ENCODE measurements at regions of chr17 and their contacts with region 1.

Region 1: DNA sequence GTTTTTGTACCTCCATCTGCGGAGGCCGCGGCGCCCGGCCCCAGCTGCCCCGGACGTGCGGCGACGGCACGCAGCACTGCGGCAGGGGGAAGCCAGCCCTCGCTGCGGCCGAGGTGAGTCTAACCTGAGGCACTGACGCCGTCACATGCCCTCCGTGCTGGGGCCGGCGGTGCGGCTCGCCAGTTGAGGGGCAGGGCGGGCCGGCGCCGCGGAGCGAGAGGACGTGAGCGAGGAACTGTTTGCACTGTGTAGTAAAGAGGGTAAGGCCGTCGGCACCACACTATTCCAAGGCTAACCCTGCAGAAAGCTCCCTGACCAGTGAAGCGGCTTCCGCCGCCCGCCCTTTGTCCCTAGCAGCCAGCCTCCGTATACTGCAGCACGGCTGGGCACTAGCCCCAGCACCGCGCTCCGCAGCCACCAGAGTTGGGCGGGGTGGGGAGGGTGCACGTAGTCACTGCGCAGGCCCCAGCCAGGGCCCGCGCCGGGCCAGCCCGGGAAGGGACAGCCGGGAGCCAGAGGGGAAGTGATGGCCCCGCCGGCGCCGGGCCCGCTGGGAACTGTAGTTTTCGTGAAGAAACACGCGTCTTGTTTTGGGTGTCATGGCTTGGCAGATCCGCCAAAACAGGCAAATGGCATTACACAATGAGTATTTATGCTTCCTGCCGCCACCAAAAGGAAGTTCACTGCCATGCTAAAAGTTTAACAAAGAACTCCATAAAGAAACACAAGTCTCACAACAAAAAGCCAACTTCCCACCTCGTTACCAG is 580 bp upstream of the KANSL1 start:
- DNase-seq: peak; percentile 76 to 99 (median 93)
- ATAC-seq: peak; percentile 72 to 76 (median 76)
- H3K4me3 ChIP-seq: peak overlapping the region; percentile 94 to 96
- H3K4me3 Mint-ChIP-seq: peak overlapping the region; percentile 83 to 96 (median 85)
- H3K27ac ChIP-seq: peak overlapping the region; percentile 100
- H3K27ac Mint-ChIP-seq: peak overlapping the region; percentile 93 to 98
- H3K4me1 ChIP-seq: peaks cover 39 to 58% of the 10 kb centered on the region in 2 experiments
- H3K4me1 Mint-ChIP-seq: peaks cover 58 to 74% (median 66%) of the 10 kb centered on the region in 3 donors
- H3K27me3 ChIP-seq: no peaks in the 10 kb centered on the region
- H3K27me3 Mint-ChIP-seq: no peaks in the 10 kb centered on the region

Region 2: DNA sequence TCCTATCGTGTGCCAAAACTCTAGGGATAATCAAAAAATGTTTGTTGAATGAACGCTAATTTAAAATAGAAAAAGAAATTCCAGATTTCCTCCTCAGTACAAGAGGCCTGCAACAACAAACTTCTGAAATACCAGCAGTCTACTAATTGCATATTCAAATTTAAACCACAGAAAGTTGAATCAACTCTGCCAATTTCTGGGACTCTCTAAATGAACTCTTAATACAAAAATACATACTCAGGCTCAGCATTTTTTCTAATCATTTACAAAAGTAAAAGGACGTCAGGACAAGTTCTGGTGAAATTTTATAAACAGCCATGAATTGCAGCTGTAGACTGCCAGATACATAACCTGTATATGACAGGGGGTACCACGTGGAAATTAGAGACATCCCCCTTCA is 49.6 kb before region 1 on chr17:
- CTCF ChIA-PET with region 1: interaction called, 8 to 13 read pairs
- POLR2A ChIA-PET with region 1: interaction called, 5 to 7 read pairs
- DNase-seq: no peak
- ATAC-seq: no peak
- H3K4me3 ChIP-seq: no peak overlapping the region
- H3K4me3 Mint-ChIP-seq: peak overlapping the region in 1 of 3 donors; percentile 53
- H3K27ac ChIP-seq: no peak overlapping the region
- H3K27ac Mint-ChIP-seq: no peak overlapping the region
- H3K4me1 ChIP-seq: peaks cover 40 to 60% of the 10 kb centered on the region in 2 experiments
- H3K4me1 Mint-ChIP-seq: peaks cover 92 to 98% (median 94%) of the 10 kb centered on the region in 3 donors
- H3K27me3 ChIP-seq: no peaks in the 10 kb centered on the region
- H3K27me3 Mint-ChIP-seq: no peaks in the 10 kb centered on the region

Region 3: GRCh38 chr17:46163316-46163715 is 30.5 kb before region 1 on chr17:
- CTCF ChIA-PET with region 1: interaction called, 5 to 11 read pairs
- POLR2A ChIA-PET with region 1: interaction called in 1 of 2 experiments, 6 read pairs
- DNase-seq: no peak
- ATAC-seq: no peak
- H3K4me3 ChIP-seq: no peak overlapping the region
- H3K4me3 Mint-ChIP-seq: peak overlapping the region in 2 of 3 donors; percentile 3 to 4
- H3K27ac ChIP-seq: no peak overlapping the region
- H3K27ac Mint-ChIP-seq: peak overlapping the region in 1 of 2 donors; percentile 9
- H3K4me1 ChIP-seq: peaks cover 34 to 59% of the 10 kb centered on the region in 2 experiments
- H3K4me1 Mint-ChIP-seq: peaks cover 84 to 92% (median 90%) of the 10 kb centered on the region in 3 donors
- H3K27me3 ChIP-seq: no peaks in the 10 kb centered on the region
- H3K27me3 Mint-ChIP-seq: no peaks in the 10 kb centered on the region

Region 4: GRCh38 chr17:46171939-46172338 is 21.9 kb before region 1 on chr17:
- CTCF ChIA-PET with region 1: interaction called, 5 to 14 read pairs
- POLR2A ChIA-PET with region 1: interaction called in 1 of 2 experiments, 5 read pairs
- DNase-seq: peak in 11 of 35 experiments; percentile 9 to 31 (median 27)
- ATAC-seq: peak; percentile 41 to 66 (median 48)
- H3K4me3 ChIP-seq: no peak overlapping the region
- H3K4me3 Mint-ChIP-seq: peak overlapping the region in 2 of 3 donors; percentile 28 to 59
- H3K27ac ChIP-seq: peak overlapping the region; percentile 20
- H3K27ac Mint-ChIP-seq: peak overlapping the region; percentile 66 to 88
- H3K4me1 ChIP-seq: peaks cover 37 to 63% of the 10 kb centered on the region in 2 experiments
- H3K4me1 Mint-ChIP-seq: peaks cover 92 to 95% (median 94%) of the 10 kb centered on the region in 3 donors
- H3K27me3 ChIP-seq: no peaks in the 10 kb centered on the region
- H3K27me3 Mint-ChIP-seq: no peaks in the 10 kb centered on the region

Region 5: GRCh38 chr17:46179375-46179999 is 14.3 kb before region 1 on chr17:
- CTCF ChIA-PET with region 1: interaction called, 7 to 14 read pairs
- POLR2A ChIA-PET with region 1: interaction called in 1 of 2 experiments, 6 read pairs
- DNase-seq: no peak
- ATAC-seq: peak in 1 of 4 experiments; percentile 56
- H3K4me3 ChIP-seq: no peak overlapping the region
- H3K4me3 Mint-ChIP-seq: peak overlapping the region; percentile 38 to 71 (median 45)
- H3K27ac ChIP-seq: no peak overlapping the region
- H3K27ac Mint-ChIP-seq: peak overlapping the region; percentile 48 to 73
- H3K4me1 ChIP-seq: peaks cover 55 to 66% of the 10 kb centered on the region in 2 experiments
- H3K4me1 Mint-ChIP-seq: peaks cover 91 to 95% (median 94%) of the 10 kb centered on the region in 3 donors
- H3K27me3 ChIP-seq: no peaks in the 10 kb centered on the region
- H3K27me3 Mint-ChIP-seq: no peaks in the 10 kb centered on the region

Region 6: GRCh38 chr17:46274238-46274637 is 80.4 kb after region 1 on chr17:
- CTCF ChIA-PET with region 1: no interaction called
- POLR2A ChIA-PET with region 1: no interaction called
- DNase-seq: no peak
- ATAC-seq: no peak
- H3K4me3 ChIP-seq: no peak overlapping the region
- H3K4me3 Mint-ChIP-seq: no peak overlapping the region
- H3K27ac ChIP-seq: no peak overlapping the region
- H3K27ac Mint-ChIP-seq: no peak overlapping the region
- H3K4me1 ChIP-seq: no peaks in the 10 kb centered on the region
- H3K4me1 Mint-ChIP-seq: peaks cover 0 to 12% (median 0%) of the 10 kb centered on the region in 3 donors
- H3K27me3 ChIP-seq: peaks cover 0 to 4% of the 10 kb centered on the region in 2 experiments
- H3K27me3 Mint-ChIP-seq: peaks cover 4 to 9% of the 10 kb centered on the region in 2 donors

Region 7: DNA sequence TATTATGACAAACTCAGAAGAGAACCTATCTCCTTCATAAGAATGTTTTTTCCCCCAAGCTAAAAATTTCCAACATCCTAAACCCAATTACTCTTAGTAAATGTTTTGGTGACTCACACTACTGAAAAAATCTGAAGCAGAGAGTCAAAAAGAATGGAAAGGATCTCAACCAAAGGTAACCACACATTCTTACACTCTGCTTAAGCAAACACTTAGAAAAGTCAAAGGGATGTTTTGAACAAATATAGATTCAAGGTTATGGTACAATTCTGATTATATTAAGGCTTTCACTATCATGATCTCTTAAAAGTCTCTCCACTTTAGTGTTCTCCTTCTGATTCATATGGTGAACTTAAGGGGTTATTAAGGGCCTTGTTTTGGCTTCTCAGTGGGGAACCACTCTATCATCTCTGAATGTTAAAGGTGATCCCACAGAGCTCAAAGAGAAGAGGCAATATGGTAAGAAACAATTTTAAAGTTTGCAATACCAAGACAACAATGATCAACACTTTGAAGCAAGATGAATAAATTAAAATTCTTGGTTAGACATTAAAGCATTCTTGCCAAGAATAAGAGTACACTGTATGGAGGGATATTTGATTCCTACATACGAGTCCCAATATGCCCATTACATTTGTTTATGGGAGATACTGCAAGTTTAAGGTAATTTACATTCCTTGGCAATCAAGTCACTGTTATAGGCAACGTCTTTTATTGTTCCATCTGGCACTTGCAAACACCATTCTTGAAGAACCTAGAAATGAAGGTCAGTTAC is 926.1 kb after region 1 on chr17:
- CTCF ChIA-PET with region 1: no interaction called
- POLR2A ChIA-PET with region 1: no interaction called
- DNase-seq: no peak
- ATAC-seq: no peak
- H3K4me3 ChIP-seq: no peak overlapping the region
- H3K4me3 Mint-ChIP-seq: no peak overlapping the region
- H3K27ac ChIP-seq: no peak overlapping the region
- H3K27ac Mint-ChIP-seq: peak overlapping the region in 1 of 2 donors; percentile 28
- H3K4me1 ChIP-seq: no peaks in the 10 kb centered on the region
- H3K4me1 Mint-ChIP-seq: no peaks in the 10 kb centered on the region
- H3K27me3 ChIP-seq: no peaks in the 10 kb centered on the region
- H3K27me3 Mint-ChIP-seq: no peaks in the 10 kb centered on the region